CD8-positive, alpha-beta T cell (primary cell): ENCODE measurements at regions of chr4 and their contacts with region 1.

Region 1: GRCh38 chr4:17810260-17811077 is at the starts of genes DCAF16 and NCAPG:
- DNase-seq: peak; percentile 96 to 99 (median 99)
- ATAC-seq: peak; percentile 88
- H3K4me3 ChIP-seq: peak within 1 kb of the TSS; percentile 75 to 98
- H3K4me3 Mint-ChIP-seq: peak within 1 kb of the TSS; percentile 98
- H3K27ac ChIP-seq: peak within 1 kb of the TSS; percentile 88 to 97
- H3K27ac Mint-ChIP-seq: peak within 1 kb of the TSS; percentile 99
- H3K4me1 ChIP-seq: peaks cover 41% of the 10 kb centered on the region
- H3K4me1 Mint-ChIP-seq: peaks cover 54% of the 10 kb centered on the region
- H3K27me3 ChIP-seq: no peaks in the 10 kb centered on the region
- H3K27me3 Mint-ChIP-seq: no peaks in the 10 kb centered on the region
- CTCF ChIP-seq: no peak
- total RNA-seq, gene DCAF16: 82.2 to 83.4 TPM
- total RNA-seq, gene NCAPG: 0.52 to 1.3 TPM

Region 2: DNA sequence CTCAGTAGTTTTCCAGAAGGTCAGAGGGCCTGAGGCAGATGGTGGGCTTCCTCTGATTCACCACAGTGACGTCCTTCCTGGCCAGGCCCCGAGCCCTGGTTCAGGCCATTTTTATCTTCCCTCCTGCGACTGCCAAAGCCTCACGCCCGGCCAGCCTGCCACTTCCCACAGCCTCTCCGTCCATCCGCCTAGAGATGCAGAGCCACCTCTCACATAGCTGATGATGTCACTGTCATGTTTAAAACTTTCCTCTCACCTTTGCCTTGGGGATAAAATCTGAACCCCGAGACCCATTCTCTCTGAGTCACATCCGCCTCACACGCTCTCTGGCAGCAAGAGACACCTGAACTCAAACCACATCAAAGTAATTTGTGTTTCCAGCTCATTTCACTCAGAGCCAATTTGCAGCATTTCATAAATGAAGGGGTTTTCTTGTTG is 473.9 kb before region 1 on chr4:
- CTCF ChIA-PET with region 1: no interaction called
- POLR2A ChIA-PET with region 1: no interaction called
- intact Hi-C with region 1: loop called in 1 of 2 experiments (anchors 5 kb)
- DNase-seq: peak; percentile 32 to 90 (median 70)
- ATAC-seq: peak; percentile 95
- H3K4me3 ChIP-seq: no peak overlapping the region
- H3K4me3 Mint-ChIP-seq: peak overlapping the region; percentile 27
- H3K27ac ChIP-seq: peak overlapping the region in 1 of 2 experiments; percentile 44
- H3K27ac Mint-ChIP-seq: peak overlapping the region; percentile 91
- H3K4me1 ChIP-seq: peaks cover 17% of the 10 kb centered on the region
- H3K4me1 Mint-ChIP-seq: peaks cover 22% of the 10 kb centered on the region
- H3K27me3 ChIP-seq: no peaks in the 10 kb centered on the region
- H3K27me3 Mint-ChIP-seq: no peaks in the 10 kb centered on the region
- CTCF ChIP-seq: no peak

Region 3: GRCh38 chr4:17544205-17544604 is 266.3 kb before region 1 on chr4:
- CTCF ChIA-PET with region 1: interaction called, 60 read pairs
- POLR2A ChIA-PET with region 1: no interaction called
- intact Hi-C with region 1: loop called (anchors 1 kb)
- DNase-seq: no peak
- ATAC-seq: no peak
- H3K4me3 ChIP-seq: no peak overlapping the region
- H3K4me3 Mint-ChIP-seq: no peak overlapping the region
- H3K27ac ChIP-seq: no peak overlapping the region
- H3K27ac Mint-ChIP-seq: no peak overlapping the region
- H3K4me1 ChIP-seq: no peaks in the 10 kb centered on the region
- H3K4me1 Mint-ChIP-seq: peaks cover 3% of the 10 kb centered on the region
- H3K27me3 ChIP-seq: no peaks in the 10 kb centered on the region
- H3K27me3 Mint-ChIP-seq: peaks cover 9% of the 10 kb centered on the region
- CTCF ChIP-seq: no peak

Region 4: DNA sequence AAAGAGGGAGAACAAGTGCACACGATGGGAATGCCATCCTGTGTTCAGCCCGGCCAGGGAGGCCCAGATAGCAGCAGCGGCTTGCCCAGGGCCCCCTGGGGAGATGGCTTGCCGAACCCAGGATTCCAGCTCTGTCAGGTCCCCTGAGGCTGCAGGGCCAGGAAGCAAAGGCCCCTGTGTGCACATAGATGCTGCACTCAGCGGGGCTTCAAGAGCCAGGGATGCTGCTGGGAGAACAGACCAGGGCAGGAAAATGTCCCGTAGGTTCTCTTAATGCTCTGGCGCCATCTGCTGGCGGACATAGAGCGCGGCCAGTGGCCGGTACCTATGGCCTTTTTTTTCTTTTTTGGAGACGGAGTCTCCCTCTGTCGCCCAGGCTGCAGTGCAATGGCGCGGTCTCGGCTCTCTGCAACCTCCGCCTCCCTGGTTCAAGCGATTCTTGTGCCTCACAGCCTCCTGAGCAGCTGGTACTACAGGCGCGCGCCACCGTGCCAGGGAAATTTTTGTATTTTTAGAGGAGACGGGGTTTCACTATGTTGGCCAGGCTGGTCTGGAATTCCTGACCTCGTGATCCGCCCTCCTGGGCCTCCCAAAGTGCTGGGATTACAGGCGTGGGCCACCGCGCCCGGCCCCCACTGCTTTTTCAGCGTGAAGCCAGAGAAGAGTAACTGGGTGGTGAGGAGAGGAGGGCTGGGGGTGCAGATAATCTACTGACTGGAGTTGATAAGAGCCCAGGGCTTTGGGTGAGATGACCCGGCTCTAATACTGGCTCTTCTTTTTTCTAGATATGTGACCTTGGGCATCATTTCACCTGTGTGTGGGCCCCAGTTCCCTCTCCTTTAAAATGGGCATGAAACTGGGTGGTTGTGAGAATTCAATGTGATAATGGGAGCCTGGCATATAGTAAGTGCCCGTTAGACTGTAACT is 173.5 kb before region 1 on chr4:
- CTCF ChIA-PET with region 1: no interaction called
- POLR2A ChIA-PET with region 1: no interaction called
- intact Hi-C with region 1: loop called in 1 of 2 experiments (anchors 5 kb)
- DNase-seq: peak; percentile 46 to 80 (median 72)
- ATAC-seq: peak; percentile 87
- H3K4me3 ChIP-seq: no peak overlapping the region
- H3K4me3 Mint-ChIP-seq: no peak overlapping the region
- H3K27ac ChIP-seq: no peak overlapping the region
- H3K27ac Mint-ChIP-seq: no peak overlapping the region
- H3K4me1 ChIP-seq: no peaks in the 10 kb centered on the region
- H3K4me1 Mint-ChIP-seq: peaks cover 2% of the 10 kb centered on the region
- H3K27me3 ChIP-seq: no peaks in the 10 kb centered on the region
- H3K27me3 Mint-ChIP-seq: no peaks in the 10 kb centered on the region
- CTCF ChIP-seq: peak; percentile 81

Region 5: DNA sequence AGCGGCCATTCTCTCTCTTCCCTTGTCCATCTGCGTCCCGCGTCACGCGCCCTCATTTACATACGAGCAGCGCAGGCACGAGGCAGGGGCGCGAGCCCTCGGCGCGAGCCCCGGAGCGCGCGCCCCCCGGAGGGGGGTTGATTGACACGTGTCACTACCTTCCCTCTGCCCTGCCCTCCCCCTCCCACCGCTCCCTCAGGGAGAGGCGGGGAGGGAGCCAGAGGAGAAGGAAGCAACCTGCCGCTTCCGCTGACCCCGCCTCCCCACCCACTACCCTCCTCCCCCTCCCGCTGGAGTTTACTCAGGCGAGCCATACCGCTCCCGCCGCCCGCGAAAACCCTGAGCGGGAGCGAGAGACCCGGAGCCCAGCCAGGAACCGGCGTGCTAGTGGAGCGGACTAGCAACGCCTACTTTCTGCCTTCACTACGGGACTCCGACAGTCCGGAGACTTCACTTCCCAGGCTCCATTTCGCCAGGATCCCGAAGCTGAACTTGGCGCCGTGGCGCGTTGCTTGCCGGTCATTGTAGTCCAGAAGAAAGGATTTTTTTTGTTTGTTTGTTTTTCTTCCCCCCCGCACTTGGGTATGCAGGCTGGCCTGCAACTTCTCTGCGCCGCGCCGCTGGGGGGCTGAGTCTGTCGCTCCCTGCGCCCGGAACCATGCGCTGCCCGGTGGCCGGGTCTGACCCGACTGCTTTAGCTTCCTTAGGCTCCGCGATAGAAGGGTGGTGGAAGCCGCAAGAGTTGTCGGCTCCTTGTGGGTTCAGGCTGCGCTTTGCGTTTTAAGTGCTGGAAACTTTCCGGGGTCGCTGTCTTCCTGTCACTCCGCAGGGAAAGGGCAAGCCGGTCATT is 211.5 kb after region 1 on chr4 and contains the start of gene LCORL:
- CTCF ChIA-PET with region 1: no interaction called
- POLR2A ChIA-PET with region 1: no interaction called
- intact Hi-C with region 1: loop called (anchors 1 to 2 kb)
- DNase-seq: peak; percentile 75 to 95 (median 86)
- ATAC-seq: peak; percentile 83
- H3K4me3 ChIP-seq: peak within 1 kb of the TSS; percentile 63 to 98
- H3K4me3 Mint-ChIP-seq: peak within 1 kb of the TSS; percentile 95
- H3K27ac ChIP-seq: peak within 1 kb of the TSS; percentile 63 to 80
- H3K27ac Mint-ChIP-seq: peak within 1 kb of the TSS; percentile 89
- H3K4me1 ChIP-seq: peaks cover 18% of the 10 kb centered on the region
- H3K4me1 Mint-ChIP-seq: peaks cover 27% of the 10 kb centered on the region
- H3K27me3 ChIP-seq: no peaks in the 10 kb centered on the region
- H3K27me3 Mint-ChIP-seq: peaks cover 2% of the 10 kb centered on the region
- CTCF ChIP-seq: no peak
- total RNA-seq, gene LCORL: 5.3 to 7.5 TPM